PC-9 (cell line): ENCODE measurements at regions of chr14 and their contacts with region 1.

Region 1: DNA sequence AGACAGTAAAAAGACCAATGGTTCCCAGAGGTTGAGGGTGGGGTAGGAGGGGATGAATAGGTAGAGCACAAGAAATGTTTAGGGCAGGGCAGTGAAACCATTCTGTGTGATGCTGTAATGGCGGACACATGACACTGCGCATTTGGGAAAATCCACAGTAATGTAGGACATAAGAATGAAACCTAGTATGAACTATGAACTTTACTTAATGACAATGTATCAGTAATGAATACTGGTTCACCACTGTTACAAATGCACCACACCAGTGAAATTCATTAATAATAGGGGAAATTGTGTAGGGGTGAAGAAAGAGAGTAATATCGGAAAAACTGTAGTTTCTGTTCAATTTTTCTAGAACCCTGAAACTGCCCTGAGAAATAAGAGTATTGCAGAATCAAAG is 5.6 kb downstream of the ERH start:
- DNase-seq: no peak
- H3K4me3 ChIP-seq: no peak overlapping the region
- H3K27ac ChIP-seq: no peak overlapping the region
- H3K4me1 ChIP-seq: peaks cover 13% of the 10 kb centered on the region
- H3K27me3 ChIP-seq: no peaks in the 10 kb centered on the region
- CTCF ChIP-seq: no peak

Region 2: DNA sequence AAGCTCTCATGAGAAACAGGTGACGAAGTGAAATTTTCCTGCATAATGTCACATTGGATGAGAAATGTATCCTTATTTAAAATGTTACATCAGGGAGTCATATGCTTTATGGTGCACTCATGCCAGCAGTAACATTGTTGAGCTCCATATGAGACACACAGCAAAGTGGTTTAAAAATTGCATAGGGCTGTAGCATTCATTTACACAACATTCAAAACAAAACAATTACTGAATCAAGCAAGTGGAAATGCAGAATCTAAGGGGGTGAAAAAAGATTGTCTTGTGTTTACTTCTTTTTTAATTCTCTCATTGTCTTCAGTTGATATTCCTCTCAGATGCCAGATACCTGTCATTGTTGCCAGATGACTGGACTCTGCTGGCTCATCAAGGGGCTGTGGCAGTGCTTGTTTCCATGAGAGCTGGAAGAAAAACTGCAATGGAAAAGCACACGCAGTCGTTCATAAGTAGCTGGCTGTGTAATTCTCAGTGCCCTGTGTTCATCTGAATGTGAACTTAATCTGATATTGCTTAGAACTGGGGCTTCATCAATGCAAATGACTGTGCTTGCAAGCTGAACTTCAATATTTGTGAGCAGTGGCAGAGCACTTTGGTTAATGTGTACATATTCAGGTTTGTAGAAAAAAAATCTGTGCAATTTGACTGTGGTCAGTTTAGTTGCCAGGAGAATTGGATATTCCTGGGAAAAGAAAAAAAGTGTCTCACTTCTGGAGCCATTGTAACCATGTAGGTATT is 1267.3 kb before region 1 on chr14:
- CTCF ChIA-PET with region 1: no interaction called
- POLR2A ChIA-PET with region 1: no interaction called
- intact Hi-C with region 1: no loop called
- DNase-seq: peak; percentile 53 to 62
- H3K4me3 ChIP-seq: no peak overlapping the region
- H3K27ac ChIP-seq: peak overlapping the region; percentile 25; the same call in 1 of the 2 replicates
- H3K4me1 ChIP-seq: peaks cover 7% of the 10 kb centered on the region
- H3K27me3 ChIP-seq: no peaks in the 10 kb centered on the region
- CTCF ChIP-seq: no peak

Region 3: GRCh38 chr14:69287098-69288010 is 105.1 kb before region 1 on chr14:
- CTCF ChIA-PET with region 1: no interaction called
- POLR2A ChIA-PET with region 1: no interaction called
- intact Hi-C with region 1: no loop called
- DNase-seq: peak in 1 of 2 experiments; percentile 30
- H3K4me3 ChIP-seq: no peak overlapping the region
- H3K27ac ChIP-seq: no peak overlapping the region
- H3K4me1 ChIP-seq: no peaks in the 10 kb centered on the region
- H3K27me3 ChIP-seq: 0 out of 2 replicates have a peak, but pooled peaks cover 5% of the 10 kb centered on the region
- CTCF ChIP-seq: no peak

Region 4: GRCh38 chr14:70080074-70080473 is 687.6 kb after region 1 on chr14:
- CTCF ChIA-PET with region 1: no interaction called
- POLR2A ChIA-PET with region 1: interaction called, 11 read pairs
- intact Hi-C with region 1: no loop called
- DNase-seq: no peak
- H3K4me3 ChIP-seq: no peak overlapping the region
- H3K27ac ChIP-seq: no peak overlapping the region
- H3K4me1 ChIP-seq: no peaks in the 10 kb centered on the region
- H3K27me3 ChIP-seq: peaks cover 43% of the 10 kb centered on the region
- CTCF ChIP-seq: no peak